ENCODE measurements at regions of chr12 and their contacts with region 1.

Region 1: DNA sequence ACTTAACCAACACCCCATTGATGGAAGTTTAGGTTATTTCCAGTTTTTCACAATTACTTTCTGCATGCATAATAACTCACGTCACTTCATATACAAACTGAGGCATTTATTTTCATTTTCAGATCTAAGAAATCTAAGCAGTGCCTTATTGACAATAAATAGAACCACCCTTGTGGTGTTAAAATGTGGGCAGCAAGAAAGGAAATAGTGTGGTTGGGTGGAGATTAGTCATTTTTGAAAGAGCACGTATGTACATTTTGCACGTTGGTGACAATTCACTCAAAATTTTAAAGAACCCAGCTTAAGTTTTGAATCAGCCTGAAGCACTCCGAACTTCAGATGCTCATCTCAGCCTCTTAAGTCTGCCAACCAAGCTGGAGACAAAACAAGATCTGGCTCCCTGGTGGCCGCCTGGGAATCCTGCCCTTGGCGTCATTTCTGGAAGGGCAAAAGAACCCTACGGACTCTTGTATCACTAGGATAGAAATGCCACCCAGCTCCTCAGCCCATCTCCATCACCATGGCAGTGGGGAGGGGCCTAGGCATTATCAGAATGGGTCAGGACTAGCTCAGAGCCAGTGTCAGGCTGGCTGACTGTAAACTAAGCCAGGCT is 89.5 kb upstream of the BCL2L14 start:
- DNase-seq: peak; percentile 66
- H3K4me3 Mint-ChIP-seq: peak overlapping the region; percentile 34
- H3K27ac Mint-ChIP-seq: peak overlapping the region; percentile 98
- H3K4me1 Mint-ChIP-seq: peaks cover 61% of the 10 kb centered on the region
- H3K27me3 Mint-ChIP-seq: peaks cover 2% of the 10 kb centered on the region

Region 2: DNA sequence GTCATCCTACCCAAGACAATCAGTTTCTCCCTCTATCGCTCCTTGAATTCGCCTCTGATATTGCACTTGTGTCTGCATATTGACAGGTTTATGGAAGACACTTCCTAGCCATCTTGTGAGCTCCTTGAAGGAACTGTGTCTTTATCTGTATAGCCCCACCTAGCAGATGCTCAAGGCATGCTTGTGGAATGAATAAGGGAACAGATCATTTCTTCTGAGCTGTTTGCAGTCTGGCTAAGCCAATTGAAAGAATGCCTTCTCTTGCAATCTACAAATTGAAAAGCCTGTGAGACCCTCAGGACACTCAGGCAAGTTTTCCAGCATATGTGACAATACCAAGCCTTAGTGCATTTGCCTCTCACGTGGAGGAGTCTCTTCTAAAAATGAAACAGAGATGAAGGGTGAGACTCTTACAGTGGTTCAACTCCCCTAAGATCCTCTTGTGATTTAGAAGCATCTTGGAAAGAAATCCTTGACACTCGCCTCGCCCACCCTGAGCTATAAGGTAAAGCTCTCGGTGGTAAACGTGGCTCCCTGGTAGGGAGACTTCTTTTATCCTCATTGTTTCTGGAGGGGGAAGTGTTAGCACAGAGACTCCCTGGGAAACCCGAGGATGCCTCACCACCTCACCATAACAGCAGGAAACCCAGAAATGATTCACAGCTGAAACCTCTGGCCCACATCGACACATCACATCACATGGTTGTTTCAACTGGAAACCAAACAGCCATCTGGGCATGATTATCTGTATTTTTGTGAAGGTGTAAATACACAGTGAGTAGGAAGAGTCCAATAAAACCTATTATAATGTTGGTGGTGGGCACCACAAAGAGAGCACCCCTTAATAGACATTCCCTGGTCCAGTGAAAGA is 22.8 kb before region 1 on chr12:
- CTCF ChIA-PET with region 1: interaction called, 3 read pairs
- POLR2A ChIA-PET with region 1: interaction called, 14 read pairs
- DNase-seq: peak; percentile 74
- H3K4me3 Mint-ChIP-seq: peak overlapping the region; percentile 36
- H3K27ac Mint-ChIP-seq: peak overlapping the region; percentile 82
- H3K4me1 Mint-ChIP-seq: peaks cover 56% of the 10 kb centered on the region
- H3K27me3 Mint-ChIP-seq: no peaks in the 10 kb centered on the region

Region 3: GRCh38 chr12:11991604-11992003 is 10.4 kb after region 1 on chr12:
- CTCF ChIA-PET with region 1: no interaction called
- POLR2A ChIA-PET with region 1: interaction called, 10 read pairs
- DNase-seq: no peak
- H3K4me3 Mint-ChIP-seq: no peak overlapping the region
- H3K27ac Mint-ChIP-seq: no peak overlapping the region
- H3K4me1 Mint-ChIP-seq: peaks cover 3% of the 10 kb centered on the region
- H3K27me3 Mint-ChIP-seq: no peaks in the 10 kb centered on the region

Measured in activated CD4-positive, alpha-beta memory T cell treated with anti-CD3 and anti-CD28 coated beads, Interleukin-2, amount 10 ng/mL, durations not matched to agents 7 days and 5 days (primary cell).